Right cardiac atrium (tissue), 5 donors: ENCODE measurements at regions of chr1 and their contacts with region 1.

Region 1: DNA sequence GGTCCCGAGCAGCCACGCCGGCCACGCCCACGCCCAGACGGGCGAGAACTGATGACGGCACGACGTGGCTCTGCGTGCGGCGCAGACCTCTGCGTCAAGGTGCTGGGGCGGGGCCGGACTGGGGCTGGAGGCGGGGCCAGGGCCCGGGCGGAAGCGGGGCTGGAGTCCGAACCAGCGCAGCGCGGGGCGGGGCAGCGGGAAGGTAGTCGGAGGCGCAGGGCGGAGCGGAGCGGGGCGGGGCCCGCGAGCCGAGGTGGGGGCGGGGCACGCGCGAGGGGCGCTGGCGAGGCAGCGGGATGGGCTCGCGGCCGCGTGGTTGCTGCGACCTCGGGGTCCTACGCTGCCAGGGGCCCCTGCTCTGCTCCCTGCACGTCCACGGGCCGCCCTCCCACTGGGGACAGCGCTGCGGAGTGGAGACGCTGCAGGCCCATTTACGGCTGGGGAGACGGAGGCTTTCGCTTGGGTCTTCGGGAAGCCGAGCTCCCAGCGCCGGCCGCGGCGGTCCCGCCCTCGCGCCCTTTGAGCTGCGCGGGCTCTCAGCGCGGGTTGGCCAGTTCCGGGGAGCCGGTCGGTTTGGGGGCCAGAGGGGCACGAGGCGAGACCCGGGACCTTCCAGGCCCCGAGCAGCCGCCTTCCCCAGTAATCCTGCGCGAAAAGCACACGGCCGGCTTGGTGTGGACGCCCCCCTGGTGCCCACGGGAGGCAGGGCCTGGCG is at the start of gene PEX10:
- DNase-seq: peak; percentile 98 to 99 (median 99)
- ATAC-seq: peak; percentile 93 to 95
- H3K4me3 ChIP-seq: peak within 1 kb of the TSS; percentile 75
- H3K27ac ChIP-seq: peak within 1 kb of the TSS; percentile 49
- H3K4me1 ChIP-seq: peaks cover 5% of the 10 kb centered on the region
- H3K27me3 ChIP-seq: no peaks in the 10 kb centered on the region
- total RNA-seq, gene PEX10: 11.4 to 15.5 (median 13.6) TPM

Region 2: DNA sequence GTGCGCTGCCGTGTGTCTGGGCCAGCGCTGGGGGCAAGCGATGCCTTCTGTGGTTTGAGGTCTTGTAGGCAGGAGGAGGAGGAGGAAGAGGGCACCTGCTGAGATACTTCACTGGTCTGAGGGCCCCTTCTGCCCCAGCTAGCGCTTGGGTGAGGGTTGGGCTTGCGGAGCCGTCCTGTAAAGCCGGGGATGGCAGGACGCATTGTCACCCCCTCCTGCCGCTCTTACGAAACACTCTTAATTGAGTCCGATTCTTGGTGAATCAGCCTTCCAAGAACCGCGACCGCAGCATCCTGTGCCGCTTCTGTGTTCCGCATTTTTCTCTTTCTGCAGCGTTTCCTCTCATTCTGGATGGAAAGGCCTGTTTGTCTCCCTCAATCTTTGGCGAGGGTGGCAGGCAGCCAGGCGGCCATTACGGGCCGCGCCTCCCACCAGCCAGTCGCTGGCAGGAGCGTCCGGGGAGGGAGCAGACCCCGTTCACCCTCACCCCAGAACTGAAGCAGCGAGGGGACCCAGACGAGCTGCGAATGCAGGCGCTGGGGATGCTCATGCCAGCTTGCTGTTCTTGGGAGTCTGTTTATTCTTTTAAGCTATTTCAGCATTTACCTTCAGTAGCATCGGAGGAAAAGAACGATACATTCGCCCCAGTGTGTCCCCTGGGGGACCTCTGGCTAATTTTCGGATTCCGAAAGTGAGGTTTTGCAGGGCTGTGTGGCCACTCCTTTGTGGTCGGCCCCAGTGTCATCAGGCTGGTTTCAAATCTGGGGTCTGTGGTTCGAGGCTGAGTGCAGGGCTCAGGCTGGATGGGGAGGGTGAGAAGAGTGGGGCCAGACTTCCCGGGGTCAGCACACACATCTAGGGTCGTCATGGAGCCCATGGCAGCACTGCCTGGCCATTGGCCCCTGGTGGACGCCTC is 121.8 kb before region 1 on chr1:
- intact Hi-C with region 1: no loop called
- DNase-seq: peak; percentile 87 to 92 (median 92)
- ATAC-seq: peak; percentile 73 to 79
- H3K4me3 ChIP-seq: no peak overlapping the region
- H3K27ac ChIP-seq: peak overlapping the region; percentile 53
- H3K4me1 ChIP-seq: peaks cover 51% of the 10 kb centered on the region
- H3K27me3 ChIP-seq: no peaks in the 10 kb centered on the region

Region 3: GRCh38 chr1:2545759-2546514 is 133.3 kb after region 1 on chr1:
- intact Hi-C with region 1: loop called (anchors 2 to 5 kb)
- DNase-seq: peak; percentile 91 to 97 (median 96)
- ATAC-seq: peak; percentile 65 to 66
- H3K4me3 ChIP-seq: peak overlapping the region; percentile 46
- H3K27ac ChIP-seq: peak overlapping the region; percentile 75
- H3K4me1 ChIP-seq: peaks cover 9% of the 10 kb centered on the region
- H3K27me3 ChIP-seq: no peaks in the 10 kb centered on the region

Region 4: DNA sequence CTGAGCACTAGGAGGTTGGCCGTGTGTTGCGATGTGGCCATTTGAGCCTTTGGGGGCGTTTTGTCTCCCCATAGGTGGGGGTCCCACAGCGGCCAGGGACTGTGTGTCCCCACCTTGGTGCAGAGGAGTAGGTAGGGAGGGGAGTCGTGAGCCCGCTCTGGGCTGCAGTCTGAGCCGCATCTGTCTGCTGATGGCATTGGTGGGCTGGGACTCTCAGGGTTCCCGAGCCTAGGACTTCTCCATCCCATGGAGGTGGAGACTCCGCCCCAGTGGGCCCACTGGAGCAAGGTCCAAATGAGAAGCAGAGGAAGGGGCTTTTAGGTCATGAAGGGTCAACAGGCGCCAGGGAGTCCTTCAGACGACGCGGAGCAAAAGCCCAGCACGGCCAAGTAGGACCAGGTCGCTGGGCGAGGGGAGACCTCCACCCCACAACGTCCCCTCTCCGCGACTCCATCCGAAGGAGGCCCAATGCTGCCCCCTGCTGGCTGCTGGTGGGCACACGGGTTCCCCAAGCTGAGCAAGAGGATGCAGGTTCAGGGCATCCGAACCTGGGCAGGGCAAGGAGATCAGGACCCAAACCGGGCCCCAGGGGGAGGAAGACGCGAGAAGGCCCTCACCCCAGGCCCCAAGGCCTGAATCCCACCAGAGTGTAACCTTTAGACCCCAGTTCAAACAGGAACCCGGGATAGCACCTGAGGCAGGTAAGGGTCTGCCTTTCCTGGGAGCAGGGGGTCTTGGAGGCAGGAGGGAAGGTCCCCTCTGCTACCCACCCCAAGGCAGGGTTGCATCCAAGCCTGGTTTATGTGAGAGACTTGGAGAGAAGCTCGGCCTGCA is 373.9 kb after region 1 on chr1:
- intact Hi-C with region 1: loop called in 1 of 4 experiments (anchors 5 kb)
- DNase-seq: peak; percentile 39 to 83 (median 82)
- ATAC-seq: peak; percentile 15 to 38
- H3K4me3 ChIP-seq: no peak overlapping the region
- H3K27ac ChIP-seq: no peak overlapping the region
- H3K4me1 ChIP-seq: no peaks in the 10 kb centered on the region
- H3K27me3 ChIP-seq: peaks cover 6% of the 10 kb centered on the region

Region 5: DNA sequence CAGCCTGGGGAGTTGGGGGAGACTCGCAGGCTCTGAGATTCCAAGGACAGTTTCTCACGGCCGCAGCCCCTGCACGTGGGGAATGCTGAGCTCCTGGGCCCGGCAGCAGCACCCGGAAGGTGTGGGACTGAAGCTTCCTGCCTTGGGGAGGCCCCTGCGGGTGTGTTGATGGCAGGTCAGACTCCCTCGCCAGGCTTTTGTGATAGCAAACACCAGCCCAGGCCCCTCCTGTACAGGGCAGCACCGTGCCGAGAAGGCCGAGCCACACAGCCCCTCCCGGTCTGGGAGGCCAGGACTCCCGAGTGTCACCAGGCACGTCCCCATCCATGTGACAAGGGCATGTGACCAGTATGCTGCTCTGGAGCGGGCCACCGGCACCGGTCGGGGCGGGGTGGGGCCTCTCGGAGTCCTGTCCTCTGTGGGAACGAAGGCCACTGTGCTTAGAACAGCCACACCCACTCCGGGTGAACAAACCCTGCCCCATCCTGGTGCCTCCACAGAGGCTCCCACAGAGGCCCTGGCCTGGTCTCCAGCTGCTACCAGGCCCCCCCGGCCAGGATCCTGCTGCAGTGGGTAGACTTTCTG is 1010.7 kb after region 1 on chr1:
- intact Hi-C with region 1: loop called in 2 of 4 experiments (anchors 5 to 10 kb)
- DNase-seq: peak; percentile 76 to 88 (median 87)
- ATAC-seq: peak; percentile 84 to 85
- H3K4me3 ChIP-seq: no peak overlapping the region
- H3K27ac ChIP-seq: peak overlapping the region; percentile 8
- H3K4me1 ChIP-seq: no peaks in the 10 kb centered on the region
- H3K27me3 ChIP-seq: no peaks in the 10 kb centered on the region